MCF 10A (cell line): ENCODE measurements at regions of chr10 and their contacts with region 1.

Region 1: GRCh38 chr10:79463578-79464496 is 18.4 kb upstream of the ZCCHC24 start:
- DNase-seq: no peak
- H3K4me3 Mint-ChIP-seq: no peak overlapping the region
- H3K27ac Mint-ChIP-seq: no peak overlapping the region
- H3K4me1 Mint-ChIP-seq: no peaks in the 10 kb centered on the region
- H3K27me3 Mint-ChIP-seq: no peaks in the 10 kb centered on the region
- CTCF ChIP-seq: no peak

Region 2: GRCh38 chr10:79400146-79401004 is 63.5 kb before region 1 on chr10:
- CTCF ChIA-PET with region 1: interaction called, 3 read pairs
- POLR2A ChIA-PET with region 1: no interaction called
- intact Hi-C with region 1: loop called (anchors 1 kb)
- DNase-seq: peak; percentile 62
- H3K4me3 Mint-ChIP-seq: no peak overlapping the region
- H3K27ac Mint-ChIP-seq: no peak overlapping the region
- H3K4me1 Mint-ChIP-seq: peaks cover 10% of the 10 kb centered on the region
- H3K27me3 Mint-ChIP-seq: no peaks in the 10 kb centered on the region
- CTCF ChIP-seq: peak; percentile 50

Region 3: DNA sequence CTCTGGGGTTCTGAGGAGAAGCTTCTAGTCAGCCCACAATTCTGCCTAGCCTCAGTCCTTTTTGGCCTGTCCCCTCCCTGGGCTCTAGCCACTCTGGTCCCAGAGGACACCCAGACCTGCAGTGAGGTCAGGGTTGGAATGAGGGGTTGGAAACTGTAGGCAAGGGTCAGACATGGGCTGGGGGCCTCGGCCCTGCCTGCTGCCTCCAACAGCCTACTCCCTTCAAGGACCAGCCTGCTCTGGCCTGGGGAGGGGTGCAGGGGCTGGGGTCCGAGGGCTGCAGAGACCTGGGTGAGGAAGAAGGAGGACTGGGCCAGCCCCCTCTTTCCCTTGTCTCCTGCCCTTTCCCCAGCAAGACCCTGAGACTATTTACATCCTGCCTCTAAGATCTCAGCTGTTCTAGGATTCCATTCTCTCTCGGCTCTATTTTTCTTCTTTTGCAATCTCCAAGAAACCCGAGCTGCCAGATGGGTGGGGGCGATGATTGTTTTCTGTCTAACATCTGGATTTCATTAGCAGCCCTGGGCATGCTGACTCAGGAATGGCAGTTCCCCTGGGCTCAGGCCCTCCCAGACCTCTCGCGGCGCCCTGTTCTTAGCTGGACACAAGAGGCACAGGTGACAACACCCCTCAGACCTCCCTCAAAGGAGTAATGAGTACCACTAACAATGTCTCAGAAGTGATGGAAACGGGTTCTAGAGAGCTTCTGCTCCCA is 41.5 kb before region 1 on chr10:
- CTCF ChIA-PET with region 1: no interaction called
- POLR2A ChIA-PET with region 1: no interaction called
- intact Hi-C with region 1: no loop called
- DNase-seq: peak; percentile 44
- H3K4me3 Mint-ChIP-seq: no peak overlapping the region
- H3K27ac Mint-ChIP-seq: no peak overlapping the region
- H3K4me1 Mint-ChIP-seq: peaks cover 6% of the 10 kb centered on the region
- H3K27me3 Mint-ChIP-seq: no peaks in the 10 kb centered on the region
- CTCF ChIP-seq: no peak

Region 4: DNA sequence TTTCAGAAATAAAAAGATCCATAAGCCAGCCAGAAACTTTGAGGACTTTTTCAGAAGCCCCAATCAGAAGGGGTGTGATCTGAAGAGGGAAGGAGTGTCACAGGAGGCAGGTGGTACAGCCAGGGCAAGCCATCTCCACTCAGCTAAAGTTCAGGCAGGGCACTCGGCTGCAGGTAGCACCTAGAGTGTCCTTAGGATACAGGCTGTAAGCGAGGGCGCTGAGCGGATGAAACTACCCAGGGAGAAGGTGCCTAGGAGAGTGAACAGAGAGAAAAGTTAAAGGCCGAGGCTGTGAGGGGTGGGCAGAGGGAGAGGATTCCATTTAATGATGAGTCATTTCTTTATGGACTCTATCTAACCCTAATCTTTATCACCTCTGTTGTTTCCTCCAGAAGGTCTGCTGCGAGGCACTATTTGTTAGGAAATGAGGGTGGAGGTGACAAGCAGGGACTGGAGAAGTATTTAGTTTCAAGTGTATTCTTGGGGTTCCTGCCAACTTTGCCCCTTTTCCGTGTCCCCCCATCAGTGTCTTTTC is 11.3 kb after region 1 on chr10:
- CTCF ChIA-PET with region 1: interaction called, 11 read pairs
- POLR2A ChIA-PET with region 1: interaction called, 5 read pairs
- intact Hi-C with region 1: no loop called
- DNase-seq: no peak
- H3K4me3 Mint-ChIP-seq: no peak overlapping the region
- H3K27ac Mint-ChIP-seq: no peak overlapping the region
- H3K4me1 Mint-ChIP-seq: no peaks in the 10 kb centered on the region
- H3K27me3 Mint-ChIP-seq: peaks cover 35% of the 10 kb centered on the region
- CTCF ChIP-seq: no peak

Region 5: GRCh38 chr10:79502561-79503309 is 38.9 kb after region 1 on chr10:
- CTCF ChIA-PET with region 1: no interaction called
- POLR2A ChIA-PET with region 1: no interaction called
- intact Hi-C with region 1: loop called (anchors 2 kb)
- DNase-seq: peak; percentile 32
- H3K4me3 Mint-ChIP-seq: no peak overlapping the region
- H3K27ac Mint-ChIP-seq: no peak overlapping the region
- H3K4me1 Mint-ChIP-seq: peaks cover 6% of the 10 kb centered on the region
- H3K27me3 Mint-ChIP-seq: peaks cover 55% of the 10 kb centered on the region
- CTCF ChIP-seq: peak; percentile 38

Region 6: DNA sequence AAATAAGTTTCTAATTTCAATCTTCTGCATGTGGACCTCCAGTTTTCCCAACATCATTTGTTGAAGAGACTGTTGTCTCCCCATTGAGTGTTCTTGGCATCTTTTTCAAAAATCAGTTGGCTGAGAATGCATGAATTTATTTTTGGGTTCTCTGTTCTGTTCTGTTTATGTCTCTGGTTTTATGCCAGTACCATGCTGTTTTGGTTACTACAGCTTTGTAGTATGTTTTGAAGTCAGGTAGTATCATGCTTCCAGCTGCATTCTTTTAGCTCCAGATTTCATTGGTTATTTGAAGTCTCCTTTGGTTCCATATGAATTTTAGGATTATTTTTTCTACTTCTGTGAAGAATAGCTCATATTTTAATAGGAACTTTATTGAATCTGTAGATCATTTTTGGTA is 506.2 kb after region 1 on chr10:
- CTCF ChIA-PET with region 1: no interaction called
- POLR2A ChIA-PET with region 1: no interaction called
- intact Hi-C with region 1: no loop called
- DNase-seq: no peak
- H3K4me3 Mint-ChIP-seq: no peak overlapping the region
- H3K27ac Mint-ChIP-seq: no peak overlapping the region
- H3K4me1 Mint-ChIP-seq: no peaks in the 10 kb centered on the region
- H3K27me3 Mint-ChIP-seq: peaks cover 23% of the 10 kb centered on the region
- CTCF ChIP-seq: no peak